ENCODE measurements at regions of chr10 and their contacts with region 1.

Region 1: GRCh38 chr10:100303724-100304319 is 17.3 kb upstream of the BLOC1S2 start:
- DNase-seq: no peak
- H3K4me3 ChIP-seq: no peak overlapping the region
- H3K27ac ChIP-seq: no peak overlapping the region
- H3K4me1 ChIP-seq: no peaks in the 10 kb centered on the region
- H3K27me3 ChIP-seq: no peaks in the 10 kb centered on the region
- CTCF ChIP-seq: peak in 2 of 3 donors; percentile 19 to 41
- EP300 ChIP-seq: no peak
- POLR2A ChIP-seq: no peak

Region 2: DNA sequence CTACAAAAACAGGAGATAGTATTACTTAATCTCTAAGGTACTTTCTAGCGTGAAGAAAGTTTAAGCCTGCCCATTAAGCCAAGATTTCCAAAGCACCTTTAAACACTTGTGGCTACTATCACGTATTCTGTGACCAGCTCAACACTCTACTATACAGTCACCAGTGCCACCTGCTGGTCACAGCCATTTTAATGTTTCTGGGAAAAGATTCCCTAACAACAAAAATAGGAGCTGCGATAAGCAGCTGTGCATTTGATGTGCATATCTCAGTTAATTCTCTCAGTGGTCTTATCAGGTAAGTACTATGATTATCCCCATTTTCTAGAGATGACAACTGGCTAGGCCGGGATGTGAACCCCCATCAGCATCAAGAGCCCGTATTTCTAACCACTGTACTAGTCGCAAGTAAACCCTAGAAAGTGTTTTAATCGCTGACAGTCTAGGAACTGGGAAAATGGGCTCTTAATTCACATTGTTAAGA is 215.0 kb after region 1 on chr10:
- intact Hi-C with region 1: loop called in 2 of 4 experiments (anchors 10 kb)
- DNase-seq: peak; percentile 37 to 75 (median 56)
- H3K4me3 ChIP-seq: peak overlapping the region; percentile 34
- H3K27ac ChIP-seq: no peak overlapping the region
- H3K4me1 ChIP-seq: peaks cover 8% of the 10 kb centered on the region
- H3K27me3 ChIP-seq: no peaks in the 10 kb centered on the region
- CTCF ChIP-seq: peak in 2 of 3 donors; percentile 32 to 74
- EP300 ChIP-seq: no peak
- POLR2A ChIP-seq: no peak

Region 3: GRCh38 chr10:100529475-100530298 is 225.9 kb after region 1 on chr10 and contains the start of gene NDUFB8:
- intact Hi-C with region 1: loop called in 1 of 4 experiments (anchors 10 kb)
- DNase-seq: peak; percentile 88 to 92 (median 91)
- H3K4me3 ChIP-seq: peak within 1 kb of the TSS; percentile 75
- H3K27ac ChIP-seq: peak within 1 kb of the TSS; percentile 66 to 71
- H3K4me1 ChIP-seq: peaks cover 6% of the 10 kb centered on the region
- H3K27me3 ChIP-seq: no peaks in the 10 kb centered on the region
- CTCF ChIP-seq: no peak
- EP300 ChIP-seq: no peak
- POLR2A ChIP-seq: peak; percentile 52
- total RNA-seq, gene NDUFB8: 99.4 to 156 (median 150) TPM